GM10248 (cell line): ENCODE measurements at regions of chr5 and their contacts with region 1.

Region 1: GRCh38 chr5:143182901-143183820 is 220.3 kb downstream of the NR3C1 start:
- DNase-seq: peak; percentile 56
- CTCF ChIP-seq: no peak

Region 2: DNA sequence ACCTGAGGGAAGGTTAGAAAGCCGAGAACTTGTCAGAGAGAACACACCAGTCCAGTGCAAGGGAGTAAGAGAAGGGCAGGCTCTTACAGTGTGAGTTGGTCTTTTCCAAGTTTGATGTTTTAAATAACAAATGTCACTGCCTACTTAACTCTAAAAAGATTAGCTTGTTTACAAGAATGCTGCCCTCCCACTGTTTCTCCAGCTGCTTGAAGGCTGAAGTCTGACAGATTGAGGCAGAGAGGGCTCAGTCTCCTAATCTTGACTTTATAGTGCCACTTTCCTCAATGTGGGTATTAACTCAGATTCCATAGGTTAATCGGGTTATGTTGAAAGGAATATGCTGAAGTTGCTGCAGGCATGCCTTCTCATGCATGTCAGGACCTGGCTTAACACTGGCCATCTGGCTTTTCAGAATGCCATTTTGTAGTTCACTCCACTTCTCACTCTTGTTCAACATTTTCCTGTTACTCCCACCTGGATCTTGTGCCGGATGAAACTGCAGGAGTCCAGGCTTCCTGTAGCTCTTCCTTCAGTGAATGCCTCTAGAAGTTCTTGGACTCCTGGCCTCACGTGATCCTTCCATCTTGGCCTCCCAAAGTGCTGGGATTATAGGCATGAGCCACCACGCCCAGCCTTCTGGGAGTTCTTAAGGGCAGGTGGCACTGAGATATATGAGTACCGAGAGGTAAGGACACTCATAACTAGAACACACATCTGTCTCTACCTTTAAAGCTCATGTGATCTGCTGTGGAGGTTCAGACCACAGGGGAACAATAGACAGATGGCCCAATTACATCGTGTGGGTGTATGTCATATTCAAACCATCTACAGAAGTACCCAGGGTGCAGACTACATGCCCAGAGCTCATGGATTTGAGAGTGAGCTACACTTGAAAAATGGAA is 163.3 kb before region 1 on chr5:
- CTCF ChIA-PET with region 1: interaction called, 4 read pairs
- POLR2A ChIA-PET with region 1: interaction called, 10 read pairs
- DNase-seq: peak; percentile 79
- CTCF ChIP-seq: no peak

Region 3: GRCh38 chr5:143124593-143124992 is 58.6 kb before region 1 on chr5:
- CTCF ChIA-PET with region 1: interaction called, 14 read pairs
- POLR2A ChIA-PET with region 1: no interaction called
- DNase-seq: no peak
- CTCF ChIP-seq: no peak

Region 4: GRCh38 chr5:143200781-143201398 is 17.7 kb after region 1 on chr5:
- CTCF ChIA-PET with region 1: interaction called, 21 read pairs
- POLR2A ChIA-PET with region 1: interaction called, 4 read pairs
- DNase-seq: no peak
- CTCF ChIP-seq: no peak